GM12878 (cell line): ENCODE measurements at regions of chr7 and their contacts with region 1.

Region 1: DNA sequence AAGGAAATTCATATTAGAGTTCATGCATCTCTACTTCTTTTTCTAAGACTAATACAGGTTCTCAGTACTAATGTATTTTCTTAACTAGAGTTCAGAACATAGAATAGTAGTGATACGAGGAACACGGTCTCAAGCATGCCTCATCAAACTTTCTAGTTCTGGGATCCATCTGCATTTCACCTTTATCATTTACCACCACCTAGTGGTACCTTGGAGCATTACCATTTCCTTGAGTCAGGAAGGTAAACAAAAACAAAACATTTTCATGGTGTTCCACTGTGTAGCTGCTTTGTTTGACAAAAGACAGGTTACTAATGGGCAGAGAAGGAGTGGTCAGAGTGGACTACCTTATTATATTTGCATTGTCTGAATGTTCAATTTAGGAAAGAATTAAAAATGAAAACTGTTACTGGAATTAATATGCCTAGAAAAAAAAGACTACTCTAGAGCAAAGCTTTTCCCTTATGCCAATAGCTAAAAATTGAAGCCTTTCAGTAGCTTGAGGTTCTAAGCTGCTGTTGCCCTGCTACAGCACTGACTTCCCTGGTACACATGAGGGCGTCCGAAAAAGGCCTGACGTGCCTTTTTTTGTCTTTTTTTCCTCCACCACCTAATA is 44.5 kb downstream of the STARD3NL start:
- DNase-seq: peak; percentile 34
- ATAC-seq: peak; percentile 87
- H3K4me3 ChIP-seq: no peak overlapping the region
- H3K27ac ChIP-seq: no peak overlapping the region
- H3K4me1 ChIP-seq: no peaks in the 10 kb centered on the region
- H3K27me3 ChIP-seq: no peaks in the 10 kb centered on the region
- CTCF ChIP-seq: peak; percentile 72 to 79 (median 79)
- EP300 ChIP-seq: no peak
- POLR2A ChIP-seq: no peak
- RAD21 ChIP-seq: peak; percentile 97

Region 2: DNA sequence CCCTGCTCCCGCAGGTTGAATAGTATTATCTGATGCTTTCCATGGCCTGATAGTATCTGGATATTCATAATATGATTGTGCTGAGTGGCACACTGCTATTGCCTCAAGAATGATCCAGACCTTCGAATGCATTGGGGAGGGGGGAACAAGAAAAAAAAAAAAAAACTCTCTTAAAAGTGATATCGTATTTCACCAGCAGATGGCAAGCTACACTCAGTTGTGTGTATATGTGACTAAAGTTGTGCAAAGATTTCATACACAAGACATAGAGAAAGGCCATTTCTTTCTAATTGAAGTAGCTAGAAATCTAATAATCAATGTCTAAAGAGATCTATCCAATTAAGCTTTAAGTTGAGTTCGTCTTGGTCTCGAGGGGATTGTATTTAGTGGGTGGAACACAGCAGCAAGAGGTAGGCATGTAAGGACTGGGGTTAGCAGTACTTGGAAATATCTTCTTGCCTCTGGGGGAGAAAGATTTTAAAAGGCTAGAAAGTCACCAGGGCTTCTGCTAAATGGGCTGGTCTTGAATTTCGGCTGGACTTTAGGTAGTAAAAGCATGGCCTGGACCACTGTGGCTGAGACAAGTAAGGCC is 321.3 kb before region 1 on chr7:
- CTCF ChIA-PET with region 1: interaction called, 38 read pairs
- POLR2A ChIA-PET with region 1: no interaction called
- RAD21 ChIA-PET with region 1: interaction called, 6 read pairs
- SMC1A ChIA-PET with region 1: interaction called, 31 read pairs
- in situ Hi-C with region 1: loop called (anchors 5 kb)
- intact Hi-C with region 1: loop called (anchors 5 kb)
- DNase-seq: no peak
- ATAC-seq: peak; percentile 78
- H3K4me3 ChIP-seq: no peak overlapping the region
- H3K27ac ChIP-seq: no peak overlapping the region
- H3K4me1 ChIP-seq: no peaks in the 10 kb centered on the region
- H3K27me3 ChIP-seq: peaks cover 0 to 2% of the 10 kb centered on the region in 2 experiments; a peak in 1 of 4 replicates
- CTCF ChIP-seq: peak; percentile 47 to 59 (median 50); a peak in 5 of 6 replicates
- EP300 ChIP-seq: no peak
- POLR2A ChIP-seq: no peak
- RAD21 ChIP-seq: peak; percentile 64

Region 3: DNA sequence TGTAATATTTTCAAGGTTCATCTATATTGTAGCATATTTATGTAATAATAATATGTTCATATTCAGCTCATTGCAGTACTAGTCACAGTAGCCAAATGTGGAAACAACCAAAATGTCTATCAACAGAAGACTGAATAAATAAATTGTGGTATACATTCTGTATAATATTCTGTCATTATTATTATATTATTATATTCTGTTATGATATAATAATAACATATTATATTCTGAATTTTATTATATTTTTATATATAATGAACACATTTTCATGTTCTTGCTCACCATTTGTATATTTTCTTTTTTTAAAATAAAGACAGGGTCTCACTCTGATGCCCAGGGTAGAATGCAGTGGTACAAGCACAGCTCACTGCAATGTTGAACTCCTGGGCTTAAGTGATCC is 135.7 kb before region 1 on chr7:
- CTCF ChIA-PET with region 1: no interaction called
- POLR2A ChIA-PET with region 1: no interaction called
- RAD21 ChIA-PET with region 1: no interaction called
- SMC1A ChIA-PET with region 1: no interaction called
- in situ Hi-C with region 1: no loop called
- intact Hi-C with region 1: no loop called
- DNase-seq: no peak
- ATAC-seq: no peak
- H3K4me3 ChIP-seq: no peak overlapping the region
- H3K27ac ChIP-seq: no peak overlapping the region
- H3K4me1 ChIP-seq: no peaks in the 10 kb centered on the region
- H3K27me3 ChIP-seq: no peaks in the 10 kb centered on the region
- CTCF ChIP-seq: no peak
- EP300 ChIP-seq: no peak
- POLR2A ChIP-seq: no peak
- RAD21 ChIP-seq: no peak

Region 4: GRCh38 chr7:38169847-38170246 is 52.7 kb before region 1 on chr7:
- CTCF ChIA-PET with region 1: interaction called, 4 read pairs
- POLR2A ChIA-PET with region 1: no interaction called
- RAD21 ChIA-PET with region 1: no interaction called
- SMC1A ChIA-PET with region 1: interaction called, 13 read pairs
- in situ Hi-C with region 1: no loop called
- intact Hi-C with region 1: loop called (anchors 5 kb)
- DNase-seq: peak; percentile 85
- ATAC-seq: peak; percentile 82
- H3K4me3 ChIP-seq: 0 out of 2 replicates have a peak overlapping the region, but pooled peaks have one; percentile 6
- H3K27ac ChIP-seq: peak overlapping the region; percentile 57
- H3K4me1 ChIP-seq: peaks cover 34% of the 10 kb centered on the region
- H3K27me3 ChIP-seq: no peaks in the 10 kb centered on the region
- CTCF ChIP-seq: no peak
- EP300 ChIP-seq: peak; percentile 38 to 83; a peak in 3 of 4 replicates
- POLR2A ChIP-seq: no peak
- RAD21 ChIP-seq: no peak

Region 5: GRCh38 chr7:38178004-38178694 is 44.4 kb before region 1 on chr7 and contains the start of gene STARD3NL:
- CTCF ChIA-PET with region 1: interaction called, 12 read pairs
- POLR2A ChIA-PET with region 1: no interaction called
- RAD21 ChIA-PET with region 1: no interaction called
- SMC1A ChIA-PET with region 1: interaction called, 40 read pairs
- in situ Hi-C with region 1: no loop called
- intact Hi-C with region 1: loop called (anchors 5 kb)
- DNase-seq: peak; percentile 100
- ATAC-seq: peak; percentile 94
- H3K4me3 ChIP-seq: peak within 1 kb of the TSS; percentile 91
- H3K27ac ChIP-seq: peak within 1 kb of the TSS; percentile 90
- H3K4me1 ChIP-seq: no peaks in the 10 kb centered on the region
- H3K27me3 ChIP-seq: no peaks in the 10 kb centered on the region
- CTCF ChIP-seq: no peak
- EP300 ChIP-seq: no peak
- POLR2A ChIP-seq: peak; percentile 78
- RAD21 ChIP-seq: no peak
- polyA plus RNA-seq, gene STARD3NL: 76.4 to 101 TPM

Region 6: GRCh38 chr7:38186593-38187314 is 35.8 kb before region 1 on chr7:
- CTCF ChIA-PET with region 1: interaction called, 114 read pairs
- POLR2A ChIA-PET with region 1: no interaction called
- RAD21 ChIA-PET with region 1: interaction called, 4 read pairs
- SMC1A ChIA-PET with region 1: interaction called, 40 read pairs
- in situ Hi-C with region 1: no loop called
- intact Hi-C with region 1: no loop called
- DNase-seq: no peak
- ATAC-seq: peak; percentile 55
- H3K4me3 ChIP-seq: no peak overlapping the region
- H3K27ac ChIP-seq: no peak overlapping the region
- H3K4me1 ChIP-seq: peaks cover 39% of the 10 kb centered on the region
- H3K27me3 ChIP-seq: no peaks in the 10 kb centered on the region
- CTCF ChIP-seq: no peak
- EP300 ChIP-seq: no peak
- POLR2A ChIP-seq: no peak
- RAD21 ChIP-seq: no peak

Region 7: GRCh38 chr7:38232502-38233366 is 10.1 kb after region 1 on chr7:
- CTCF ChIA-PET with region 1: interaction called, 14 read pairs
- POLR2A ChIA-PET with region 1: no interaction called
- RAD21 ChIA-PET with region 1: interaction called, 3 read pairs
- SMC1A ChIA-PET with region 1: interaction called, 20 read pairs
- in situ Hi-C with region 1: no loop called
- intact Hi-C with region 1: no loop called
- DNase-seq: peak; percentile 82
- ATAC-seq: peak; percentile 96
- H3K4me3 ChIP-seq: no peak overlapping the region
- H3K27ac ChIP-seq: 0 out of 2 replicates have a peak overlapping the region, but pooled peaks have one; percentile 34
- H3K4me1 ChIP-seq: peaks cover 14% of the 10 kb centered on the region
- H3K27me3 ChIP-seq: no peaks in the 10 kb centered on the region
- CTCF ChIP-seq: peak in 1 of 3 experiments; percentile 17; a peak in 1 of 6 replicates
- EP300 ChIP-seq: peak in 1 of 2 experiments; percentile 82
- POLR2A ChIP-seq: no peak
- RAD21 ChIP-seq: no peak

Region 8: GRCh38 chr7:38318803-38319416 is 96.3 kb after region 1 on chr7:
- CTCF ChIA-PET with region 1: interaction called, 430 read pairs
- POLR2A ChIA-PET with region 1: interaction called, 3 read pairs
- RAD21 ChIA-PET with region 1: interaction called, 229 read pairs
- SMC1A ChIA-PET with region 1: interaction called, 289 read pairs
- in situ Hi-C with region 1: no loop called
- intact Hi-C with region 1: loop called (anchors 2 kb)
- DNase-seq: no peak
- ATAC-seq: peak; percentile 96
- H3K4me3 ChIP-seq: no peak overlapping the region
- H3K27ac ChIP-seq: no peak overlapping the region
- H3K4me1 ChIP-seq: no peaks in the 10 kb centered on the region
- H3K27me3 ChIP-seq: no peaks in the 10 kb centered on the region
- CTCF ChIP-seq: peak; percentile 74 to 88 (median 82)
- EP300 ChIP-seq: no peak
- POLR2A ChIP-seq: no peak
- RAD21 ChIP-seq: peak; percentile 93